Activated naive CD4-positive, alpha-beta T cell treated with anti-CD3 and anti-CD28 coated beads for 36 hours (primary cell): ENCODE measurements at regions of chr20 and their contacts with region 1.

Region 1: GRCh38 chr20:35092524-35093266 is at the start of gene TRPC4AP:
- DNase-seq: peak; percentile 90
- H3K4me3 Mint-ChIP-seq: peak within 1 kb of the TSS; percentile 89
- H3K27ac Mint-ChIP-seq: peak within 1 kb of the TSS; percentile 100
- H3K4me1 Mint-ChIP-seq: peaks cover 59% of the 10 kb centered on the region
- H3K27me3 Mint-ChIP-seq: no peaks in the 10 kb centered on the region
- total RNA-seq, gene TRPC4AP: 49.6 to 51.7 TPM

Region 2: GRCh38 chr20:34891166-34892062 is 201.3 kb before region 1 on chr20:
- CTCF ChIA-PET with region 1: interaction called, 4 read pairs
- intact Hi-C with region 1: loop called (anchors 1 kb)
- DNase-seq: peak; percentile 71
- H3K4me3 Mint-ChIP-seq: peak overlapping the region; percentile 16
- H3K27ac Mint-ChIP-seq: peak overlapping the region; percentile 87
- H3K4me1 Mint-ChIP-seq: peaks cover 48% of the 10 kb centered on the region
- H3K27me3 Mint-ChIP-seq: no peaks in the 10 kb centered on the region

Region 3: DNA sequence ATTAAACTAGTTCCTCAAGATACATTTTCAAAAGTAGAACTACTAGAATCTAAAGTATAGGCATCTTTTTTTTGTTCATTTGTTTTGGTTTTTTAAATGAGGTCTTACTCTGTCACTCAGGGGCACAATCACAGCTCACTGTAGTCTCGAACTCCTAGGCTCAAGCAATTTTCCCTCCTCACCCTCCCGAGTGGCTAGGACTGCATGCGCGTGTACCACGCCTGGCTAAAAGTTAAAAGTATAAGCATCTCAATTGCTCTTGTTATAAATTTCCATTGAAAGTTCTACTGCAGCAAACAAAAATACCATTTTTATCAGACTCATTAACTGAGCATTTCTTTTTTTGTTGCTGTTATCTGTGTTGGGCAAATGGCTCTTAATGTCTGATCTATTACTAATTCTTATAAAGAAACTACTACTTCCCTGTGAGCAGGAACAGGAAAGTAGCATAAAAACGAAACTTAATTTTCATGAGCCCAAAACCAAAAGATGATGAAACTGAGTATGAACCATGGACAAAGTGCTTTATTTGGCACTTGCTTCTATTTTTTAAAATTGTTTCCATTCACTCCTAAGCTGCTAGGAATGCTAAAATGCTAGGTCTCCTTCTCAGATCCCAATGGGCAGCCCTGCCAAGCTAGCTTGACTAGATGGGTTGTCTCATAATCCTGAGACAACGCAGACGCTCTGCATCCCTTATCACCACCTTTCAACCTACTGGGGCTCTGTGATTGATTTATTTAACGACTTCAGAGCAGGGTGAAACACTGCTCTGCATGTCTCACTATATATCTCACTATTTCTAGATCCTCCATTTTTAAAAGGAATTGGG is 37.0 kb before region 1 on chr20:
- CTCF ChIA-PET with region 1: interaction called, 3 read pairs
- intact Hi-C with region 1: loop called (anchors 2 kb)
- DNase-seq: peak; percentile 8
- H3K4me3 Mint-ChIP-seq: peak overlapping the region; percentile 22
- H3K27ac Mint-ChIP-seq: peak overlapping the region; percentile 93
- H3K4me1 Mint-ChIP-seq: peaks cover 36% of the 10 kb centered on the region
- H3K27me3 Mint-ChIP-seq: no peaks in the 10 kb centered on the region

Region 4: DNA sequence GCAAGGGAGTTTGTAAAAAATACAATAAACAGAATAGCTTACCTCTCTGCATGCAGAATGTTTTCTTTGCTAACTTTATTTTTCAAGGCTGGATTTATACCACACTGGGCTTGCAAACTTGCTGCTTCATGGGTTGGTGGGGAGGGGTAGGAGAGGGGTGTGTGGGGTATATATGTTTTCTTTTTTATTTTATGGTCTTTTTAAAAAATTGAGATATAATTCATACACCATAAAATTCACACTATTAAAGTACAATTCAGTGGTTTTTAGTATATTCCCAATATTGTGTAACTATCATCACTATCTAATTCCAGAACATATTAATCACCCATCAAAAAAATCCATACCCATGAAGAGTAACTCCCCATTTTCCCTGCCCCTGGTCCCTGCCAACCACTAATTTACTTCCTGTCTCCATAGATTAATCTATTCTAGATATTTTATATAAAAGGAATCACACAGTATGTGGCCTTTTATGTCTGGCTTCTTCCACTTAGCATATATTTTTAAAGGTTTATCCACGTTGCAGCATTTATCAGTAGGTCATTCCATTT is 14.2 kb after region 1 on chr20:
- CTCF ChIA-PET with region 1: interaction called, 16 read pairs
- intact Hi-C with region 1: no loop called
- DNase-seq: no peak
- H3K4me3 Mint-ChIP-seq: no peak overlapping the region
- H3K27ac Mint-ChIP-seq: no peak overlapping the region
- H3K4me1 Mint-ChIP-seq: peaks cover 9% of the 10 kb centered on the region
- H3K27me3 Mint-ChIP-seq: no peaks in the 10 kb centered on the region

Region 5: GRCh38 chr20:35207950-35208611 is 115.4 kb after region 1 on chr20:
- CTCF ChIA-PET with region 1: interaction called, 35 read pairs
- intact Hi-C with region 1: loop called (anchors 1 kb)
- DNase-seq: peak; percentile 91
- H3K4me3 Mint-ChIP-seq: no peak overlapping the region
- H3K27ac Mint-ChIP-seq: no peak overlapping the region
- H3K4me1 Mint-ChIP-seq: no peaks in the 10 kb centered on the region
- H3K27me3 Mint-ChIP-seq: no peaks in the 10 kb centered on the region

Region 6: GRCh38 chr20:35277531-35278395 is 185.1 kb after region 1 on chr20 and contains the start of gene MMP24OS:
- CTCF ChIA-PET with region 1: interaction called, 4 read pairs
- intact Hi-C with region 1: loop called (anchors 2 kb)
- DNase-seq: peak; percentile 87
- H3K4me3 Mint-ChIP-seq: peak within 1 kb of the TSS; percentile 97
- H3K27ac Mint-ChIP-seq: peak within 1 kb of the TSS; percentile 96
- H3K4me1 Mint-ChIP-seq: peaks cover 16% of the 10 kb centered on the region
- H3K27me3 Mint-ChIP-seq: no peaks in the 10 kb centered on the region
- total RNA-seq, gene MMP24OS: 26.4 to 29.2 TPM

Region 7: GRCh38 chr20:35303735-35304491 is 211.2 kb after region 1 on chr20:
- CTCF ChIA-PET with region 1: no interaction called
- intact Hi-C with region 1: loop called (anchors 1 kb)
- DNase-seq: peak; percentile 95
- H3K4me3 Mint-ChIP-seq: no peak overlapping the region
- H3K27ac Mint-ChIP-seq: peak overlapping the region; percentile 10
- H3K4me1 Mint-ChIP-seq: peaks cover 54% of the 10 kb centered on the region
- H3K27me3 Mint-ChIP-seq: no peaks in the 10 kb centered on the region